CD8-positive, alpha-beta memory T cell (primary cell): ENCODE measurements at regions of chr17 and their contacts with region 1.

Region 1: DNA sequence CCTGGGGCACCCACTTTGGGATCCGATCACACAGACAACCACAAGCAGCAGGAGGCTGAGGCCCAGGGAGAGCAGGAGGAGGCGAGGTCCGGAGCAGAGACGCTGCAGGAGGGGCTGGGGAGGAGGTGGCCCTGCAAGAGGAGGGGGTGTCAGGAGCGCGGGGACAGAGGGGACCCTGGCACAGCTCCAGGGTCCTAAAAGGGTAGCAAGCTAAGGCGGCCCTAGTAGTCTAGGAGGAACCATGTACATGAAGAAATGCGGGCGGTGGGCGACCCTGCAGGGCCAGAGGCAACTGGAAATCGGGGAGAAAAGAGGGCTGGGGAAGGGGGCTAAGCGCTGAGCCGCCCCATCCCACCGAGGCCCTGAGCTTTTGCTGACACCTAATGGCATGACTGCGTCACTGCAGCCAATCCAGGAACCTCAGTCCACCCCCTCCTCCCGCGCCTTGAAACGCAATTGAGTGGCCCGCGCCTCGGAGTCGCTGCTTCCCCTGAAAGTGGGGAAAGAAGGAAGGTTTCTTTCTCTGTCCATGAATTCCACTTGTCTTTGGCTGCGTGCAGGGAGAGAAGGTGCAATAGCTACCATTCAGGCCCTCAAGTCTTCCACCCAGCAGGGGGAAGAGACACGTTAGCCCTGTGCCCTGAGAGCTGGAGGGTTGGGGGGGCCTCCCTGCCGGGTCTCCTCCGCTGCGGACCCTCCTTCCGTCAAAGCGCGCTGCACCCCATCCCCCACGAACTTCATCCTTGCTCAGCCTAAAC is 1.8 kb downstream of the ASGR1 start:
- DNase-seq: peak; percentile 42 to 74 (median 49)
- H3K4me3 ChIP-seq: peak overlapping the region; percentile 10
- H3K4me3 Mint-ChIP-seq: peak overlapping the region; percentile 36 to 70 (median 66)
- H3K27ac ChIP-seq: no peak overlapping the region
- H3K27ac Mint-ChIP-seq: peak overlapping the region in 3 of 8 donors; percentile 12 to 94 (median 50)
- H3K4me1 ChIP-seq: peaks cover 26% of the 10 kb centered on the region
- H3K4me1 Mint-ChIP-seq: peaks cover 10 to 13% (median 10%) of the 10 kb centered on the region in 3 donors
- H3K27me3 ChIP-seq: peaks cover 18% of the 10 kb centered on the region
- H3K27me3 Mint-ChIP-seq: peaks cover 14 to 19% of the 10 kb centered on the region in 2 donors

Region 2: GRCh38 chr17:7136266-7136877 is 41.0 kb before region 1 on chr17:
- CTCF ChIA-PET with region 1: interaction called, 10 read pairs
- POLR2A ChIA-PET with region 1: interaction called, 9 read pairs
- DNase-seq: peak; percentile 58 to 84 (median 69)
- H3K4me3 ChIP-seq: no peak overlapping the region
- H3K4me3 Mint-ChIP-seq: no peak overlapping the region
- H3K27ac ChIP-seq: no peak overlapping the region
- H3K27ac Mint-ChIP-seq: no peak overlapping the region
- H3K4me1 ChIP-seq: peaks cover 13% of the 10 kb centered on the region
- H3K4me1 Mint-ChIP-seq: peaks cover 12 to 26% (median 17%) of the 10 kb centered on the region in 3 donors
- H3K27me3 ChIP-seq: no peaks in the 10 kb centered on the region
- H3K27me3 Mint-ChIP-seq: peaks cover 18 to 20% of the 10 kb centered on the region in 2 donors

Region 3: DNA sequence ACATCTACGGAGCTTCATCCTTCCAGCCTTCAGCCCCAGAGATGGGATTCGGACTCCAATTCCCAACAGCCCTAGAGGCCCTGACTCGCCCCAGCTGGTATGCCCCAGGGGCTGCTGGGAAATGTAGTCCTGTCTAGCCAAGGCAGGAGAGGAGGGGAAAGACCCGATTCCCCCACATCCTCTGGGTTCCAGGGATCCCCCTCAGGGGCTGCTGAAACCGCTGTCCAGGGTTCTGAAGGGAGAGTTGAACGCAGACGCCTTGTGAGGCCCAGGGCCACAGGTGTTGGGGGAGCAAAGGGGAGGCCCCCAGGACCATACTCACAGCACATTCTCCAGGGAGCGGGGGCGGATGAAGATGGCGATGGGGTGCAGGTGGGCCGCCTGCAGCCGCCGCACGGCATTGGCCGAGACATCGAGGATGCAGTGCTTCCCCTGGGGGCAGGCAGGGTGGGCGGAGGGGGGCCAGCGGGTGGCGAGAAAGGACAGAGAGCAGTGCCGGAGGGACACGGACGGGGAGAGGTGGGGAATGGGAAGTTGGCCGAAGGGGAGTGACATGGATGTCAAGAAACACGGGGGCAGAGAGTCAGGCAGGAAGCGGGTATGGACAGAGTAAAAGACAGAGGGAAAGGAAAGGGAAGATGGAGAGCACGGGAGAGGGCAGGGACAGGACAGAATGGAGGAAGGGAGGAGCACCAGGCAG is 14.3 kb after region 1 on chr17:
- CTCF ChIA-PET with region 1: interaction called, 11 read pairs
- POLR2A ChIA-PET with region 1: no interaction called
- DNase-seq: no peak
- H3K4me3 ChIP-seq: no peak overlapping the region
- H3K4me3 Mint-ChIP-seq: no peak overlapping the region
- H3K27ac ChIP-seq: no peak overlapping the region
- H3K27ac Mint-ChIP-seq: no peak overlapping the region
- H3K4me1 ChIP-seq: no peaks in the 10 kb centered on the region
- H3K4me1 Mint-ChIP-seq: no peaks in the 10 kb centered on the region
- H3K27me3 ChIP-seq: no peaks in the 10 kb centered on the region
- H3K27me3 Mint-ChIP-seq: peaks cover 0 to 2% of the 10 kb centered on the region in 2 donors

Region 4: GRCh38 chr17:7261172-7261927 is 84.0 kb after region 1 on chr17:
- CTCF ChIA-PET with region 1: no interaction called
- POLR2A ChIA-PET with region 1: no interaction called
- DNase-seq: peak in 3 of 5 donors; percentile 25 to 50 (median 33)
- H3K4me3 ChIP-seq: peak overlapping the region; percentile 26
- H3K4me3 Mint-ChIP-seq: peak overlapping the region; percentile 72 to 83 (median 76)
- H3K27ac ChIP-seq: no peak overlapping the region
- H3K27ac Mint-ChIP-seq: peak overlapping the region in 6 of 8 donors; percentile 51 to 85 (median 74)
- H3K4me1 ChIP-seq: peaks cover 19% of the 10 kb centered on the region
- H3K4me1 Mint-ChIP-seq: peaks cover 22 to 32% (median 23%) of the 10 kb centered on the region in 3 donors
- H3K27me3 ChIP-seq: no peaks in the 10 kb centered on the region
- H3K27me3 Mint-ChIP-seq: peaks cover 4 to 6% of the 10 kb centered on the region in 2 donors